PC-3 (cell line): ENCODE measurements at regions of chr3 and their contacts with region 1.

Region 1: GRCh38 chr3:183907911-183908331 is 23.2 kb upstream of the PARL start:
- DNase-seq: no peak
- ATAC-seq: no peak
- H3K4me3 ChIP-seq: no peak overlapping the region
- H3K27ac ChIP-seq: no peak overlapping the region
- H3K4me1 ChIP-seq: peaks cover 2% of the 10 kb centered on the region; the same call in 1 of the 2 replicates
- H3K27me3 ChIP-seq: no peaks in the 10 kb centered on the region
- CTCF ChIP-seq: no peak

Region 2: GRCh38 chr3:183924956-183925355 is 17.0 kb after region 1 on chr3:
- CTCF ChIA-PET with region 1: no interaction called
- POLR2A ChIA-PET with region 1: no interaction called
- intact Hi-C with region 1: no loop called
- DNase-seq: peak; percentile 97
- ATAC-seq: peak; percentile 98
- H3K4me3 ChIP-seq: no peak overlapping the region; the same call in 1 of the 2 replicates
- H3K27ac ChIP-seq: peak overlapping the region; percentile 97
- H3K4me1 ChIP-seq: peaks cover 24% of the 10 kb centered on the region
- H3K27me3 ChIP-seq: no peaks in the 10 kb centered on the region
- CTCF ChIP-seq: no peak

Region 3: DNA sequence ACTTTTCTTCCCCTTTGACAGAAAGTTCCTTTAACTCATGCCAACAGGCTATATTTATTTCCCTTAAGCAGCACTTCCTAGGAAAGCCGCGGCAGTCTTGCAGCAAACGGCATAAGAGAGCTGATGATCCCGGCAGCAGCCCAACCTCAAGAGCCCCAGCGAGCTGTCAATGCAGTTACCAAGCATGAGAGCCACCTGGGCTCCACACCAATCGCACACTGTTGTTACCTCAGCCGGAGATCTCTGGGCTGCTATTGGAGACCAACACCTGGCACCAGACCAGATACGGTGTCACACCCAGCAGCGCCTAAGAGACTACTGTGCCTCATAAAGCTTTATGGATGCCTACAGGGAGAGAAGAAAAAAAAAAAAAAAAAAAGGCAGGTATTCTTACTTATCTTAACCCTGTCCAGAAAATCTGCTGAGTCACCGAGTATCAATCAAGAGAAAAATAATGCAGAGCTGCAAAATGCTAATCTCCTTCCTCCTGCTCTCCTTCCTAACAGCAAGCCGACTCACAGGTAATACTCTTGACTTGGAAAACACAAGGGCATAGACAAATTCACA is 98.1 kb after region 1 on chr3:
- CTCF ChIA-PET with region 1: no interaction called
- POLR2A ChIA-PET with region 1: interaction called, 27 read pairs
- intact Hi-C with region 1: no loop called
- DNase-seq: peak; percentile 98
- ATAC-seq: peak; percentile 90
- H3K4me3 ChIP-seq: peak overlapping the region; percentile 42; the same call in 1 of the 2 replicates
- H3K27ac ChIP-seq: peak overlapping the region; percentile 89
- H3K4me1 ChIP-seq: peaks cover 49% of the 10 kb centered on the region
- H3K27me3 ChIP-seq: no peaks in the 10 kb centered on the region
- CTCF ChIP-seq: no peak

Region 4: GRCh38 chr3:184073610-184074009 is 165.7 kb after region 1 on chr3:
- CTCF ChIA-PET with region 1: no interaction called
- POLR2A ChIA-PET with region 1: no interaction called
- intact Hi-C with region 1: no loop called
- DNase-seq: no peak
- ATAC-seq: no peak
- H3K4me3 ChIP-seq: no peak overlapping the region
- H3K27ac ChIP-seq: no peak overlapping the region
- H3K4me1 ChIP-seq: no peaks in the 10 kb centered on the region
- H3K27me3 ChIP-seq: no peaks in the 10 kb centered on the region
- CTCF ChIP-seq: no peak